Cardiac septum (tissue), 1 donor: ENCODE measurements at regions of chr4 and their contacts with region 1.

Region 1: GRCh38 chr4:185142912-185143595 is at the start of gene SLC25A4:
- DNase-seq: peak; percentile 94
- total RNA-seq, gene SLC25A4: 1,443 TPM

Region 2: DNA sequence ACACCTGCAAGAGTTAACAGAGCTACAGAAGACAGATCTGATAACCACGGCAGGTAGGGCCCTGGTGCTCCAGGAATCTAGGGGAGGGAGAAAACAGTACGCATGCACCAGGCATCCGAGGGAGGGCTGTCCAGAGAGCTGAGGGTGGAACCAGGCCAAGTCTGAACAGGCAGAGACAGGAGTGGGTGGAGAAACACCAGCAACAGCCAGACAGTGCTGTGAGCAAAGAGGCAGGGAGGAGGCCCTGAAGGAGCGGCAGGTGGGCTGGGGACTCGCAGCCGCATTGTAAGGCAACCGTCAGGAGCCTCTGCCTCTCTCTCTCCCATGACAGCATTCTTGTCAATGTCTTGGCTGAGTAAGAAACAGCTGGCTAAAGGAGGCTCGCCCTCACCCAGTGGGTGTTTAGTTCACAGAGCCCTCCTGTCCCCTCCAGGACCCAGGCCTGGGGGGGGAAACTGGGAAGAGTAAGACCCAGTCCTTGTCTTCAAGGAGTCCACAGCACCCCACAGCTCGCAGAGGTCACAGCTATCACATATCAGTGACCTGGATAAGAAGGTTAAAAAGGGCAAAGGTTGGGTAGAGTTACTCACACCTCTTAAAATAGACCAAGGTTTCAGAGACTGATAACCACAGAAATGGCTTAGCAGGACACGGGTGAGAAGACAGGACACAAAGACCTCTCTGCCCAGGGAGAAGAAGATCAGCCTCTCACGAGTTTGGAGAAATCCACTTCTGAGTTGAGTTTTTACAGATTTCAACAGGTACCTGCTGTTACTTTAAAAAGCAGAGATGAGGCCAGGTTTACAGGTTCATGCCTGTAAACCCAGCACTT is 327.8 kb before region 1 on chr4:
- intact Hi-C with region 1: loop called (anchors 5 kb)
- DNase-seq: peak; percentile 91